ENCODE measurements at regions of chr5 and their contacts with region 1.

Region 1: GRCh38 chr5:10761166-10761932 is at the start of gene DAP:
- DNase-seq: peak; percentile 80 to 88
- H3K4me3 ChIP-seq: peak within 1 kb of the TSS; percentile 61
- H3K4me3 Mint-ChIP-seq: peak within 1 kb of the TSS; percentile 86
- H3K27ac Mint-ChIP-seq: peak within 1 kb of the TSS; percentile 81
- H3K4me1 ChIP-seq: peaks cover 13% of the 10 kb centered on the region; the same call in 1 of the 2 replicates
- H3K4me1 Mint-ChIP-seq: peaks cover 19% of the 10 kb centered on the region
- H3K27me3 ChIP-seq: no peaks in the 10 kb centered on the region
- H3K27me3 Mint-ChIP-seq: no peaks in the 10 kb centered on the region
- CTCF ChIP-seq: no peak
- total RNA-seq, gene DAP: 74.7 and 77.6 TPM in 2 replicates

Region 2: DNA sequence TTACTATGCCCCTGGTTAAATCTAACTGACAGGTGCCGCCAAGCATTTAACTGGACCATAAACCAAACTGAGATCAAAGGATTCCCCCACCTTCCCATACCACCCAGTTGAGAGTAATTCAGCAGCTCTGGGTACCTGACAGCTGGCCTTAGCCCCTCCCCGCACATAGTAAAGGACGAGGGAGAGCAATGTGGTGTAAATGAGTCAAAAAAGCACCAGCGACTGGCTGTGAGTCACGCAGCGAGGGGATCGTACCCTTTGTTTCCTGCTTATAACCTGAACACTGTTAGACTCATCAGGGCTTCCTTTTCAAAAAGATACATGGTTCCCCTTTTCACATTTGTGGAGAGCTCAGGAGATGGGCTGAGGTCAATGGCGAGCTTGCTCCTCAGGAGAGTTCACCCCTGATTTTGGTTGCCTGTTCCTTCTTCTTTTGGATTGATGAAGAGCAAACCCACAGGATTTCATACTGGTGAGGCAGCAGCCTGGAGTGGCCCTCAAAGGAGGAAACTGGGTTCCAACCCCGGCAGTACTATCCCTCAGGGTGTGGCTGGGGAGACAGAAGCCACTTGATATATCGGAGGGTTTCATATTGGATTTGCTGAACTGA is 126.0 kb before region 1 on chr5:
- CTCF ChIA-PET with region 1: no interaction called
- POLR2A ChIA-PET with region 1: no interaction called
- intact Hi-C with region 1: no loop called
- DNase-seq: no peak
- H3K4me3 ChIP-seq: no peak overlapping the region
- H3K4me3 Mint-ChIP-seq: no peak overlapping the region
- H3K27ac Mint-ChIP-seq: no peak overlapping the region
- H3K4me1 ChIP-seq: no peaks in the 10 kb centered on the region
- H3K4me1 Mint-ChIP-seq: no peaks in the 10 kb centered on the region
- H3K27me3 ChIP-seq: no peaks in the 10 kb centered on the region
- H3K27me3 Mint-ChIP-seq: no peaks in the 10 kb centered on the region
- CTCF ChIP-seq: no peak

Region 3: GRCh38 chr5:10701567-10702039 is 59.7 kb before region 1 on chr5:
- CTCF ChIA-PET with region 1: no interaction called
- POLR2A ChIA-PET with region 1: no interaction called
- intact Hi-C with region 1: loop called (anchors 5 kb)
- DNase-seq: peak in 1 of 2 experiments; percentile 59
- H3K4me3 ChIP-seq: no peak overlapping the region
- H3K4me3 Mint-ChIP-seq: no peak overlapping the region
- H3K27ac Mint-ChIP-seq: no peak overlapping the region
- H3K4me1 ChIP-seq: peaks cover 24% of the 10 kb centered on the region
- H3K4me1 Mint-ChIP-seq: peaks cover 21% of the 10 kb centered on the region
- H3K27me3 ChIP-seq: no peaks in the 10 kb centered on the region
- H3K27me3 Mint-ChIP-seq: no peaks in the 10 kb centered on the region
- CTCF ChIP-seq: peak; percentile 69 to 86

Region 4: GRCh38 chr5:10831419-10831818 is 70.1 kb after region 1 on chr5:
- CTCF ChIA-PET with region 1: no interaction called
- POLR2A ChIA-PET with region 1: no interaction called
- intact Hi-C with region 1: loop called (anchors 5 kb)
- DNase-seq: no peak
- H3K4me3 ChIP-seq: no peak overlapping the region
- H3K4me3 Mint-ChIP-seq: no peak overlapping the region
- H3K27ac Mint-ChIP-seq: no peak overlapping the region
- H3K4me1 ChIP-seq: peaks cover 9% of the 10 kb centered on the region; the same call in 1 of the 2 replicates
- H3K4me1 Mint-ChIP-seq: peaks cover 29% of the 10 kb centered on the region
- H3K27me3 ChIP-seq: no peaks in the 10 kb centered on the region
- H3K27me3 Mint-ChIP-seq: no peaks in the 10 kb centered on the region
- CTCF ChIP-seq: no peak

Region 5: GRCh38 chr5:10856683-10857337 is 95.5 kb after region 1 on chr5:
- CTCF ChIA-PET with region 1: no interaction called
- POLR2A ChIA-PET with region 1: interaction called, 3 read pairs
- intact Hi-C with region 1: loop called (anchors 2 kb)
- DNase-seq: peak in 1 of 2 experiments; percentile 60
- H3K4me3 ChIP-seq: no peak overlapping the region
- H3K4me3 Mint-ChIP-seq: no peak overlapping the region
- H3K27ac Mint-ChIP-seq: peak overlapping the region; percentile 5
- H3K4me1 ChIP-seq: peaks cover 16% of the 10 kb centered on the region
- H3K4me1 Mint-ChIP-seq: peaks cover 11% of the 10 kb centered on the region
- H3K27me3 ChIP-seq: no peaks in the 10 kb centered on the region
- H3K27me3 Mint-ChIP-seq: no peaks in the 10 kb centered on the region
- CTCF ChIP-seq: peak; percentile 59 to 64

Region 6: GRCh38 chr5:11903614-11904269 is 1142.4 kb after region 1 on chr5:
- CTCF ChIA-PET with region 1: no interaction called
- POLR2A ChIA-PET with region 1: no interaction called
- intact Hi-C with region 1: no loop called
- DNase-seq: peak in 1 of 2 experiments; percentile 13
- H3K4me3 ChIP-seq: peak overlapping the region; percentile 18
- H3K4me3 Mint-ChIP-seq: no peak overlapping the region
- H3K27ac Mint-ChIP-seq: no peak overlapping the region
- H3K4me1 ChIP-seq: no peaks in the 10 kb centered on the region
- H3K4me1 Mint-ChIP-seq: no peaks in the 10 kb centered on the region
- H3K27me3 ChIP-seq: no peaks in the 10 kb centered on the region; the same call in 1 of the 2 replicates
- H3K27me3 Mint-ChIP-seq: peaks cover 12% of the 10 kb centered on the region
- CTCF ChIP-seq: no peak